ENCODE measurements at regions of chr16 and their contacts with region 1.

Region 1: GRCh38 chr16:4260368-4260767 is 12.5 kb downstream of the TFAP4 start:
- DNase-seq: no peak
- H3K4me3 ChIP-seq: no peak overlapping the region
- H3K4me3 Mint-ChIP-seq: no peak overlapping the region
- H3K27ac ChIP-seq: no peak overlapping the region
- H3K27ac Mint-ChIP-seq: no peak overlapping the region
- H3K4me1 ChIP-seq: no peaks in the 10 kb centered on the region
- H3K4me1 Mint-ChIP-seq: peaks cover 0 to 11% (median 4%) of the 10 kb centered on the region in 4 donors
- H3K27me3 ChIP-seq: no peaks in the 10 kb centered on the region
- H3K27me3 Mint-ChIP-seq: no peaks in the 10 kb centered on the region

Region 2: GRCh38 chr16:4271176-4272066 is 11.1 kb after region 1 on chr16:
- CTCF ChIA-PET with region 1: interaction called, 84 read pairs
- POLR2A ChIA-PET with region 1: interaction called, 109 read pairs
- intact Hi-C with region 1: no loop called
- DNase-seq: peak; percentile 84 to 94 (median 85)
- H3K4me3 ChIP-seq: peak overlapping the region; percentile 48 to 91
- H3K4me3 Mint-ChIP-seq: peak overlapping the region; percentile 86 to 93 (median 91)
- H3K27ac ChIP-seq: peak overlapping the region; percentile 71
- H3K27ac Mint-ChIP-seq: peak overlapping the region; percentile 72 to 98 (median 91)
- H3K4me1 ChIP-seq: peaks cover 10% of the 10 kb centered on the region
- H3K4me1 Mint-ChIP-seq: peaks cover 6 to 27% (median 14%) of the 10 kb centered on the region in 4 donors
- H3K27me3 ChIP-seq: no peaks in the 10 kb centered on the region
- H3K27me3 Mint-ChIP-seq: no peaks in the 10 kb centered on the region